HEK293 (cell line): ENCODE measurements at regions of chrX and their contacts with region 1.

Region 1: GRCh38 chrX:69538321-69538876 is 34.3 kb downstream of the NALF2 start:
- H3K4me3 ChIP-seq: peak overlapping the region; percentile 15
- H3K27ac ChIP-seq: 0 out of 2 replicates have a peak overlapping the region, but pooled peaks have one; percentile 39
- H3K4me1 ChIP-seq: no peaks in the 10 kb centered on the region; the same call in 1 of the 2 replicates
- CTCF ChIP-seq: peak; percentile 94

Region 2: DNA sequence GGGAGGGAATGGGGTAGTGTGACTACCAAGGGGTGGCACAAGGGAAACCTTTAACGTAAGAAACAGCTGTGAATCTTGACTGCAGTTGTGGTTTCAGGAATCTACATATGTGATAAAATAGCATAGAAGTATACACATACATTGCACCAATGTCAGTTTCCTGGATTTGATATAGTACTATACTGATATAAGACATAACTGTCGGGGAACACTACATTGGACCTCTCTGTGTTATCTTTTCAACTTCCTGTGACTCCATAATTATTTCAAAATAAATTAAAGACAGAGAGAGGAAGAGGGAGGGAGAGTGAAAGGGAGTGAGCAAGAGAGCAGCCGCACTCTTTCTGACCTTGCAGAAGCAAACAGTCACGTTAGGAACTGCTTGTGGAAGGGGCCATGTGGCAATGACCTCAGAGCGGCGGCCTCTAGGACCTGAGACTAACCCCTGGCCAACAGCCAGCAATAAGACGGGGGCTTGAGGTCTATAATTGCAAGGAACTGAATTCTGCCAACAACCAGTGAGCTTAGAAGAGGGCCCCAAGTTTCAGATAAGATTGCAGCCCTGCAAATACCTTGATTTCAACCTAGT is 13.1 kb after region 1 on chrX:
- CTCF ChIA-PET with region 1: interaction called, 16 read pairs
- POLR2A ChIA-PET with region 1: no interaction called
- H3K4me3 ChIP-seq: no peak overlapping the region
- H3K27ac ChIP-seq: no peak overlapping the region
- H3K4me1 ChIP-seq: no peaks in the 10 kb centered on the region; the same call in 1 of the 2 replicates
- CTCF ChIP-seq: no peak

Region 3: GRCh38 chrX:69674891-69675290 is 136.5 kb after region 1 on chrX:
- CTCF ChIA-PET with region 1: no interaction called
- POLR2A ChIA-PET with region 1: no interaction called
- H3K4me3 ChIP-seq: no peak overlapping the region
- H3K27ac ChIP-seq: no peak overlapping the region
- H3K4me1 ChIP-seq: no peaks in the 10 kb centered on the region
- CTCF ChIP-seq: no peak

Region 4: GRCh38 chrX:69741721-69742120 is 203.3 kb after region 1 on chrX:
- CTCF ChIA-PET with region 1: no interaction called
- POLR2A ChIA-PET with region 1: no interaction called
- H3K4me3 ChIP-seq: no peak overlapping the region
- H3K27ac ChIP-seq: no peak overlapping the region
- H3K4me1 ChIP-seq: no peaks in the 10 kb centered on the region
- CTCF ChIP-seq: no peak